Activated B cell treated with CpG ODN at 0.5 μM for 24 hours (primary cell): ENCODE measurements at regions of chr12 and their contacts with region 1.

Region 1: DNA sequence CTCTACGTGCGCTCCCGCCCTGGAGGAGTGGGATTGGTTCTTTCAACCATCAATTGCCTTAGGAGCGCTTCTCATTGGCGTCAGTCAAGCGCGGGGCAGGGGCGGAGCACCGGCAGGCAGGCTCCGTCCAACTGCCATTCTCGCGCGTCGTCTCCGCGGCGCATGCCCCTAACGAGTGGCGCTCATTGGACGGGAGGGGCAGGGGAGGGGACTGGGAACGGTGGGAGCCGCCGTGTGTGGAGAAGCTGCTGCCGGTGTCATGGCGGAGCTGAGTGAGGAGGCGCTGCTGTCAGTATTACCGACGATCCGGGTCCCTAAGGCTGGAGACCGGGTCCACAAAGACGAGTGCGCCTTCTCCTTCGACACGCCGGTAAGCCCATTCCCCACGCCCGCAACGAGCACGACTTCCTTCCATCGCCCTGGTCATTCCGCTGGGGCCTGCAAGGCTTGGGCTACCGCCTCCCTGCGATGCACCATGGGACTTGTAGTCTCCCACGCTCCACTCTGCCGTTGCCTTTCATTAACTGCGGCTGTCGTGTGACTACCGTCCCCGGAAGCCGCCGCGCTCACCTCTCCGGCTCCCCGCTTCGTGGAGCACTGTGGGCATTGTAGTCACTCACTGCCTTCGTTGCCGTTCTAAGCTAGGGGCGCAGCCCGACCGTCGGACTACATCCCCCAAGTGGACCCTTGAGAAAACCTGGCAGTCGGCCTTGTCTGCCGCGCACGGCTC is at the start of gene USP5:
- DNase-seq: peak; percentile 91
- ATAC-seq: peak; percentile 78
- H3K4me3 Mint-ChIP-seq: peak within 1 kb of the TSS; percentile 100
- H3K27ac Mint-ChIP-seq: peak within 1 kb of the TSS; percentile 99
- H3K4me1 Mint-ChIP-seq: peaks cover 30% of the 10 kb centered on the region
- H3K27me3 Mint-ChIP-seq: no peaks in the 10 kb centered on the region
- CTCF ChIP-seq: no peak
- total RNA-seq, gene USP5: 108 and 110 TPM in 2 replicates

Region 2: GRCh38 chr12:6570264-6570887 is 281.7 kb before region 1 on chr12:
- CTCF ChIA-PET with region 1: interaction called, 3 read pairs
- POLR2A ChIA-PET with region 1: interaction called, 4 read pairs
- intact Hi-C with region 1: loop called (anchors 5 kb)
- DNase-seq: peak; percentile 37
- ATAC-seq: no peak
- H3K4me3 Mint-ChIP-seq: no peak overlapping the region
- H3K27ac Mint-ChIP-seq: peak overlapping the region; percentile 41
- H3K4me1 Mint-ChIP-seq: peaks cover 28% of the 10 kb centered on the region
- H3K27me3 Mint-ChIP-seq: no peaks in the 10 kb centered on the region
- CTCF ChIP-seq: no peak

Region 3: DNA sequence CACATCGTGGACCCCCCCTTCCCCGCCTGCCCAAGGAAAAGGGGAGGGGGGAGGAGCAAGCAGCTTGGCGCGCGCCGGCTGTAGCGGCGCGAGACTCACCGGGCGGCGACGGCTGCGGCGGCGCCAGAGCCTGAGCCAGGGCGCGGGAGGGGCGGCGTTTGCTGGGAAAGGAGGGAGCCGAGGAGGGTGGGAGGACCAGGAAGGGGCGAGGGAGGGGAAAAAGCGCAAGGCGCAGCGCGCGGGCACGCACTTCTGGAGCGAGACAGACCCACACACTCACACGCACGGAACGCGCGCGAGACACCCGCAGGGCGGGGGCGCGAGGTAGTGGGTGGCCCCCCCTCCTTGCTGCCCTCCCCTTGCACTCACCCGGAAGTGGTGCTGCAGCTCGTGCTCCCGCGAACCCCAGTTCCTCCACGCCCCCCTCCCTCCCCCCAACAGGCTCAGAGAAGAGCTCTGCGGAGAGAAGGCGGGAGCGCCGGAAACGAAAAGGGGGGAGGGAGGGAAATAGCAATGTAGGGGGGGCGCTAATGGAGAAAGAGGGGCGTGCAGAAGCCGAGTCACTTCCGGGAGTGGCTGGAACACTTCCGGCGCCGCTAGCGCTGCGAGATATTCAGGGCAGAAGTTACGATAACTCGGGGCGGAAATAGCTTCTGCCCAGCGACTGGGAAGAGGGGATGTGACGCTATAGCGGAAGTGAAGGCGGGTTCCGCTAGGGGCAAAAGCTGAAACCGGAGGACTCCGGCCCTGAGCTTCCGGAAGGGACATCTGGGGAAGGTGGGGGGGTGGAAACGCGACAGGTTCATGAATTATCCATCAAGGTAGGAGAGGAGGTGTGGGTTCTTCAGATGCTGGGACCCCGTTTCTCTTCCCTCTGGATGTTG is 162.8 kb before region 1 on chr12 and contains the start of gene ZNF384:
- CTCF ChIA-PET with region 1: no interaction called
- POLR2A ChIA-PET with region 1: interaction called, 37 read pairs
- intact Hi-C with region 1: no loop called
- DNase-seq: peak; percentile 84
- ATAC-seq: peak; percentile 77
- H3K4me3 Mint-ChIP-seq: peak within 1 kb of the TSS; percentile 94
- H3K27ac Mint-ChIP-seq: peak within 1 kb of the TSS; percentile 96
- H3K4me1 Mint-ChIP-seq: peaks cover 52% of the 10 kb centered on the region
- H3K27me3 Mint-ChIP-seq: no peaks in the 10 kb centered on the region
- CTCF ChIP-seq: no peak
- total RNA-seq, gene ZNF384: 81.7 and 98.6 TPM in 2 replicates

Region 4: DNA sequence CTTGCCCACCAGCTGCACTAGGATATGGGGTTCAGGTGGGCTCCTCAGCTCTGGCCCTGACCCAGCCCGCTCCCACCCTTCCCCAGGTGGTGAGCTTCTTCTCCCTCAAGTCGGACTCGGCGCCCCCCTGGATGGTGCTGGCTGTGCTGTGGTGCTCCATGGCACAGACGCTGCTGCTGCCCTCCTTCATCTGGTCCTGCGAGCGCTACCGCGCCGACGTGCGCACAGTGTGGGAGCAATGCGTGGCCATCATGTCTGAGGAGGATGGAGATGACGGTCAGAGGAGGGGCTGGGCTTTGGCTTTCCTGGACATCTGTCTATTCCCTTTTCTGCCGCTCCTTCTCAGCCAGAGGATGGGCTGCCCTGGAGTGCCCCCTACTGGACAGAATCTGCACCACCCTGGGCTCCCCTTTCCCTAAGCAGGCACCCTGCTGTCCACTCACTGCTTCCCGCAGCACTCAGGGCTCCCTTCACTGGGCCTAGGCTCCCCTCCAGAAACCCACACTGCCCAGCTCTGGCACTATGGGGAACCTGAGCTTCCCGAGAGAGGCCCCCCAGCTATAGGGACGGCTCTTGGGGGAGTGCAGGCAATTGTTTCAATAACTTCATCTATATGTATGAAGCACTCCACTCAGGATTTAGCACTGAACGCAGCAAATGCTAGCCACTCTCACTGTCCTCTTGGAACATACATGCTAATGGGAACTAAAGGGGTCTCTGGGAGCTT is 26.5 kb before region 1 on chr12:
- CTCF ChIA-PET with region 1: no interaction called
- POLR2A ChIA-PET with region 1: interaction called, 7 read pairs
- intact Hi-C with region 1: loop called (anchors 2 kb)
- DNase-seq: peak; percentile 69
- ATAC-seq: peak; percentile 62
- H3K4me3 Mint-ChIP-seq: no peak overlapping the region
- H3K27ac Mint-ChIP-seq: no peak overlapping the region
- H3K4me1 Mint-ChIP-seq: peaks cover 32% of the 10 kb centered on the region
- H3K27me3 Mint-ChIP-seq: peaks cover 73% of the 10 kb centered on the region
- CTCF ChIP-seq: peak; percentile 47

Region 5: DNA sequence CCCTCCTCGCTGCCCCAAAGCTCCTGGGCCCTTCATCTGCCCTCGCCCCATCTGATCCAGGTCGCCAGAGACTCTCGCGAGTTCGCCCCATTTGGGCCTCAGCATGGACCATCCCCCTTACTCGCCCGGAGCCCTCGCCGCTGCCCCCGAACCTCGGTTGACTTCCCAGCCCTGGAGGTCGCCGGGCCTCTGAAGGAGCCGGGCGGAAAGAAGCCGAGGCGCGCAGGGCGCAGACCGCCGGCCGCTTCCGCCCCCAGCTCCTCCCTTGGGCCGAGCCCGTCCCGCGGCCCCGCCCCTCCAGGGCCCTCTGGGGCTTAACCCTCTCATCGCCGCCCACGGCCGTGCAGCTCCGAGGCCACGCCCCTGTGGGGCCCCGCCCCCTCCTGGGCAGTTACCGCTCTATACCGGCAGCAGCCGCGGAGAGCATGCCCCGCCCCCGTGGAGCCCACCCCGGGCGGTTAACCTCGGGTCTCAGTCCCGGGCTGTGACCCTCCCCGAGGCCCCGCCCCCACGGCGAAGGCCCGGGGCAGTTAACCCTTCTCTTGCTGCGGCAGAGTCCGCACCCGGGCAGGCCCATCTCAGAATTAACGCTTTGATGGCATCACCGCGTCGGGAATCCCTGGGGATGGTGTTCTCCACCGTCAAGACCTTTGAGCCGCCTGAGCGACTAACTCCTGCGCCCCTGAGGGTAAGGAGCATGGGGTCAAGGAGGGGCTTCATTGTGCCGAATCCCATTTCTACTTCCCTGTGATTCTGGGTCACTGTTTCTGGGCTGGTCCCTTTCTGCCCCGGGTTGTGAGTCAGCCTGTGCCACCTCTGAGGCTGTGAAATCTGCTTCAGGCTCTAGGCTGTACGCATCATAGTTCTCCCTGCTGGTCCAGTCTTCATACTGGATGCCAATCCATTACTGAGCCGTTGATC is 21.3 kb after region 1 on chr12 and contains the start of gene SPSB2:
- CTCF ChIA-PET with region 1: interaction called, 34 read pairs
- POLR2A ChIA-PET with region 1: interaction called, 190 read pairs
- intact Hi-C with region 1: loop called (anchors 1 kb)
- DNase-seq: peak; percentile 100
- ATAC-seq: peak; percentile 88
- H3K4me3 Mint-ChIP-seq: peak within 1 kb of the TSS; percentile 88
- H3K27ac Mint-ChIP-seq: peak within 1 kb of the TSS; percentile 85
- H3K4me1 Mint-ChIP-seq: peaks cover 37% of the 10 kb centered on the region
- H3K27me3 Mint-ChIP-seq: no peaks in the 10 kb centered on the region
- CTCF ChIP-seq: no peak
- total RNA-seq, gene SPSB2: 14.4 and 16.2 TPM in 2 replicates

Region 6: GRCh38 chr12:6944381-6945186 is 92.5 kb after region 1 on chr12:
- CTCF ChIA-PET with region 1: no interaction called
- POLR2A ChIA-PET with region 1: interaction called, 65 read pairs
- intact Hi-C with region 1: no loop called
- DNase-seq: peak; percentile 80
- ATAC-seq: peak; percentile 41
- H3K4me3 Mint-ChIP-seq: peak overlapping the region; percentile 91
- H3K27ac Mint-ChIP-seq: peak overlapping the region; percentile 96
- H3K4me1 Mint-ChIP-seq: peaks cover 72% of the 10 kb centered on the region
- H3K27me3 Mint-ChIP-seq: no peaks in the 10 kb centered on the region
- CTCF ChIP-seq: peak; percentile 59

Region 7: GRCh38 chr12:6987948-6988553 is 136.0 kb after region 1 on chr12:
- CTCF ChIA-PET with region 1: no interaction called
- POLR2A ChIA-PET with region 1: no interaction called
- intact Hi-C with region 1: no loop called
- DNase-seq: no peak
- ATAC-seq: no peak
- H3K4me3 Mint-ChIP-seq: no peak overlapping the region
- H3K27ac Mint-ChIP-seq: no peak overlapping the region
- H3K4me1 Mint-ChIP-seq: no peaks in the 10 kb centered on the region
- H3K27me3 Mint-ChIP-seq: no peaks in the 10 kb centered on the region
- CTCF ChIP-seq: no peak

Region 8: DNA sequence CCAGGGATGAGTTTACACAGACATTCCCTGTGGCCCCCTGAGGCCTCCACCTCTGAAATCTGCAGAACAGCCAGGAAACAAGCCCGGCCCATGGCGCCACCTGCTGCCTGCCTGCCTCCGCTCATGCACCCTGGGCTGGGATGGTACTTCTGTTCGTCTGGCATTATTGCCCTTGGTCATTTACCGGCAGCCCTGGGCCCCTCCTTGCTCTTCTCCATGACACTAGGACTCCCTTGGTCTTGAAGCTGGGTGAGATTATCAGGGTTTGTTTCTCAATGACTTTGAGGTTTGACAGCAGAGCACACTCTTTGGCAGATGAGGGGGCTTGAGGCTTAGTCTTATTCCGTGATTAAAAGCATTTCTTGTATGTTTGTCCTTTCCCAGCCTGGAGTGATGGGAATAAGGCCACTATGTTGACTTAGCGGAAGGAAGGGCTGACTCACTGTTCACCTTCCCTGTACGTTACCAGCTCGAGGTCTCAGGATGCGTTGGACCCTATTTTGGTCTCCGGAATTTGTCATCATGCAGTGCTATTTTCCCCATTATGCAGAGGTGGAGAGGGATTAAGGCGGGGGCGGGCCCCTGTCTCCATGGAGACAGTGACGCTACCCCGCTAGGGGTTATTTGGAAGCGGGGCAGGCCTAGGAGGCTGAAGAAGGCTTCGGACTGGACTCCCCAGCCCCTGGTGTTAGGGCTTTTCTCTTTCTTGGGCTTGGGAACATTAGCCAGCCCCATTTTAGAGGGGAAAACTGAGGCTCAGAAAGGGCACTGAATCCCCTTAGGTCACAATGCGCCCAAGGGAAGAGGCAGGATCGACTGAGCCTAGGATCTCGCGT is 336.7 kb after region 1 on chr12:
- CTCF ChIA-PET with region 1: no interaction called
- POLR2A ChIA-PET with region 1: no interaction called
- intact Hi-C with region 1: loop called (anchors 1 kb)
- DNase-seq: peak; percentile 46
- ATAC-seq: peak; percentile 39
- H3K4me3 Mint-ChIP-seq: peak overlapping the region; percentile 92
- H3K27ac Mint-ChIP-seq: peak overlapping the region; percentile 91
- H3K4me1 Mint-ChIP-seq: peaks cover 31% of the 10 kb centered on the region
- H3K27me3 Mint-ChIP-seq: no peaks in the 10 kb centered on the region
- CTCF ChIP-seq: no peak